GM10248 (cell line): ENCODE measurements at regions of chr10 and their contacts with region 1.

Region 1: DNA sequence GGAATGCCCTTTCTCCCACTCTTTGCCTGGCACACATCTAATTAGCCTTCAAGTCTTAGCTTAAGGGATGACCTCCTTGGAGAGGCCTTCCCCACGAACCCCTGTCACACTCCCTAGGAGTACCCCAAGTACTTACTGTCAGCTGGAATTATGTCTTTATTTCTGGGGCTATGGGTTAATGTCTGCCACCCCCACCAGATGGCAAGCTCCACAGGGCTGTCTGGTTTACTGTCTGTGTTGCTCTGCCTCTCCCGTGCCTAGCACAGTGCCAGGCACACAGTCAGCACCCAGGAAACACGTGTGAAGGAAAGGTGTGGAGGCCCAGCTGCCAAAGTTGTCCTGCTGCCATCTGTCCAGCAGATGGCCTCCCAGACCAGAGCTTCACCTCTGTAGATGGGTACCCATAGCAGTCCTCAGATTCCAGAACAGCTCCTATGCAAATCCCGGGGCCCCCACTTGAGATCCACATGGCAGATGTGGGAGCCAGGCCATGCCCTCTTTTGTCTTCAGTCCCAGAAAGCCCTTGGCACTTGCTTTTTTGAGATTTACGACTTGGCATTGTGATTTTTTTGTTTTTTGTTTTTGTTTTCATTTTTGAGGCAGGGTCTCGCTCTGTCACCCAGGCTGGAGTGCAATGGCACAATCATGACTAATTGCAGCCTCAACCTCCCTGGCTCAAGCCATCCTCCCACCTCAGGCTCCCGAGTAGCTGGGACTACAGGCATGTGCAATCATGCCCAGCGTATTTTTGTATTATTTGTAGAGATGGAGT is 17.2 kb upstream of the PALD1 start:
- DNase-seq: peak; percentile 81
- CTCF ChIP-seq: peak; percentile 80

Region 2: GRCh38 chr10:70425096-70425495 is 36.3 kb before region 1 on chr10:
- CTCF ChIA-PET with region 1: interaction called, 11 read pairs
- POLR2A ChIA-PET with region 1: no interaction called
- DNase-seq: no peak
- CTCF ChIP-seq: no peak

Region 3: DNA sequence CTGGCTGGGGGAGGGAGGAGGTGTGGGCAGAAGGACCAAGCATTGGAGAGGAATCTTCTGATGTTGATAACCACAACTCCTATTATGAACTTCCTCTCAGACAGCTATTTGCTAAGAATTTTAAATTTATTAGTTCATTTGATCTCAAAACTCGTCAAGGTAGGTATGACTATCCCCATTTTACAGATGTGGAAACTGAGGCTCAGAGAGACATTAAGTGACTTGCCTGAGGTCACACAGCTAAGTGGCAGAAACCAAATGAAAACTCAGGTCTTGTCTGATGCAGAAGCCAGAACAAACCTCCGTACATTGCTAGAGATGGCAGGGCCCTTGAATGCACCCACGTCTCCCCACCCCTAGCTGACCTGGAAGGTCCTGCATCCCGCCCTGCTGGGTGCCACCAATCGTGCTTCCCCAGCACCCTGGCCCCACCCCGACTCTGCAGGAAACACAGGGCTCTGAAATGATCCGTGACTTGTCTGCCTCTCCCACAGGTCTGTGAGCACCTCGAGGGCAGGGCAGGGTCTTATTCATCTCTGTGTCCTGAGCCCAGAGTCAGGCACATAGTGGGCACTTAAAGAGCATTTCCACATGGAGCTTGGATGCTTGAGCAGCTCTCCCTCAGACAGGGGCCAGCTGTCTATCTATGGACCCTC is 11.5 kb after region 1 on chr10:
- CTCF ChIA-PET with region 1: interaction called, 42 read pairs
- POLR2A ChIA-PET with region 1: no interaction called
- DNase-seq: no peak
- CTCF ChIP-seq: no peak

Region 4: DNA sequence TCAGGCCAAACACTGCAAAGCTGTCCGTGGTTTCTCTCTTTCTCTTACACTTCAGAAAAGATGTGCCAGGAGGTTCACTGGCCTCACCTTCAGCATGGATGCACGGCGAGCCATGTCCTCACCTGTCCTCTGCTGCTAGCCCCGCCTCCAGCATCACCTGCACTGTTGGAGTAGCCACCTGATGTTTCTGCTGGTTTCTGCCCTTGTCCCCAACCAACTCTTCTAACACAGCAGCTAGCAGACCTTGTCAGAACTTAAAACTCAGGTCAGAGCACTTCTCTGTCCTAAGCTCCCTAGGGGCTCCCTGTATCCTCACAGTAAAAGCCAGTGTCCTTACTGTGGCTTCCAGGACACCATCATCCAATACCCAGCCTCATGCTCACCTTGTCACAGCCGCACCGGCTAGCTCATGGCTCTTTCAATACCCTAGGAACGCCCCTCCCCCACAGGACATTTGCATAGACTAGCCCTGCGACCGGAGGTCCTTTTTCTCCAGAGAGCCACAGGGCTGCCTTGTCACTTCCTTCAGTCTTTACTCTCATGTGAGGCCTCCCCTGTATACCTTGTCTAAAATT is 32.3 kb after region 1 on chr10:
- CTCF ChIA-PET with region 1: interaction called, 12 read pairs
- POLR2A ChIA-PET with region 1: no interaction called
- DNase-seq: peak; percentile 76
- CTCF ChIP-seq: no peak

Region 5: GRCh38 chr10:70518695-70519094 is 57.3 kb after region 1 on chr10:
- CTCF ChIA-PET with region 1: interaction called, 15 read pairs
- POLR2A ChIA-PET with region 1: no interaction called
- DNase-seq: no peak
- CTCF ChIP-seq: no peak

Region 6: DNA sequence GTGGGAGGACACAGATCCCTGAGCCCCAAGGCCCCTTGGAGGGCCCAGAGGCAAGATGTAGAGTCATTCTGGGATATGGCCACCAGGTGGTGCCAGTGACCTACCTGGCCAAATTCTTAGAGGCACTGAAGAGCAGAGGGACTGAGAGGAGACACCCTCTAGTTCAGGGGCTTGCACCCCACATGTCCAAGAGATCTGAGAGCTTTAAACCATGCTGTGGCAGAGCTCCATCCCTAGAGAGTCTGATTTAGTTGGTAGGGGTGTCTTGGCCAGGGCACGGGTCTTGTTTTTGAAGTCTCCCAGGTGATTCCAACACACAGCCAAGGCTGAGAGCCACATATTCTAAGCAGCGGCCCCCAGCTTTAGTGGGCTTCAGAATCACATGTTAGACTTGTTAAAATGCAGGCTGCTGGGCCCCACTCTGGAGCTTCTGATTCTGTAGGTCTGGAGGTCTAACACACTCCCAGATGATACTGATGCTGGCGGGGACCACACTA is 88.6 kb after region 1 on chr10:
- CTCF ChIA-PET with region 1: interaction called, 28 read pairs
- POLR2A ChIA-PET with region 1: no interaction called
- DNase-seq: peak; percentile 83
- CTCF ChIP-seq: peak; percentile 74

Region 7: DNA sequence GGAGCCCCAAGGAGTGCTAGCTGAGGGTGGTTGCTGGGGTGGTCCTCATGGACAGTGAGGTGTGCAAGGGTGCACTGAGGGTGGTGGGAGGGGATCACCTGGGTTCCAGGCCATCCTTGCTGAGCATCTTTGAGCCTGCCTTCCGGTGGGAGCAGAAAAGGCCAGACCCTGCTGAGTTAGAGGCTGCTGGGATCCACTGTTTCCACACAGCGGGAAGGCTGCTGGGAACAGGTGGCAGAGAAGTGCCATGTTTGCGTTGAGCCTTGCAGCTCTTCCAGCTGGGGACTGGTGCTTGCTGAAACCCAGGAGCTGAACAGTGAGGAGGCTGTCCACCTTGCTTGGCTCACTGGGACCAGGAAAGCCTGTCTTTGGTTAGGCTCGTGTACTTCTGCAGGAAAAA is 106.2 kb after region 1 on chr10:
- CTCF ChIA-PET with region 1: no interaction called
- POLR2A ChIA-PET with region 1: no interaction called
- DNase-seq: no peak
- CTCF ChIP-seq: no peak

Region 8: DNA sequence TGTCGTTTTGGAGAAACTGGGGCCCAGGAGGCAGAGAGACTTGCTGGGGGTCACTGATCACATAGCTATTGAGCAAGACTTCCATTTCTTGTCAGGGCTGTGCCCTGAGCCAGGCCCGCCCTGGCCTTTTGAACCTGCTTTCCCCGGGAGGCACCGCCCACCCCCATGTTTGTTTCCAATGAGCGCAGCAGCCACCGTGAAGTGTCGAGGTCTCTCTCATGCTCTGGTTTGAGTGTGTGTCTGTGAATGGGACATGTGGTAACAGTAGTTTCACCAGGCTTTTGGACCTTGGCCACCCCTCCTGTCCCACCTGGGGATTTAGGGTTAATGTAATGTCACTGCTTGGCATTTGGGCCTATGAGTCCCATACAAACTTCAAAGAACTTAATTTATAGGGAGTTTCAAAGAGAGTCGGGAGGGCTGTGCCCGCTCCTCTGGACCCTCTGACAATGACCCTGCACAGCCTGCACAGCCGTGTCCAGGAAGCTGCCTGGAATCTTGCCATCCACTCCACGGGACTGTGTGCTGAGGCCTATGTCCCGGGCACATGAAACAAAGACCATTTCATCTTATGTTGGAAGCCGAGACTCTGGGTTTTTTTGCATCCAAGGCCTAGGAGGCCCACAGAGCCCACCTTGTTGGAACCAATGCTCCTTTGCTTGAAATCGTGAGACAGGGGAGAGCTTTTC is 134.9 kb after region 1 on chr10:
- CTCF ChIA-PET with region 1: no interaction called
- POLR2A ChIA-PET with region 1: no interaction called
- DNase-seq: no peak
- CTCF ChIP-seq: no peak